Activated B cell treated with CpG ODN at 0.5 μM for 24 hours (primary cell): ENCODE measurements at regions of chr4 and their contacts with region 1.

Region 1: GRCh38 chr4:112296949-112297880 is at the start of gene ALPK1:
- DNase-seq: no peak
- ATAC-seq: peak; percentile 94
- H3K4me3 Mint-ChIP-seq: peak within 1 kb of the TSS; percentile 85
- H3K27ac Mint-ChIP-seq: peak within 1 kb of the TSS; percentile 85
- H3K4me1 Mint-ChIP-seq: peaks cover 23% of the 10 kb centered on the region
- H3K27me3 Mint-ChIP-seq: no peaks in the 10 kb centered on the region
- CTCF ChIP-seq: no peak
- total RNA-seq, gene ALPK1: 23.1 and 26.7 TPM in 2 replicates

Region 2: GRCh38 chr4:110869862-110870572 is 1427.2 kb before region 1 on chr4:
- CTCF ChIA-PET with region 1: no interaction called
- POLR2A ChIA-PET with region 1: no interaction called
- intact Hi-C with region 1: no loop called
- DNase-seq: no peak
- ATAC-seq: peak; percentile 47
- H3K4me3 Mint-ChIP-seq: no peak overlapping the region
- H3K27ac Mint-ChIP-seq: peak overlapping the region; percentile 37
- H3K4me1 Mint-ChIP-seq: peaks cover 11% of the 10 kb centered on the region
- H3K27me3 Mint-ChIP-seq: no peaks in the 10 kb centered on the region
- CTCF ChIP-seq: no peak

Region 3: GRCh38 chr4:112279025-112279881 is 18.0 kb before region 1 on chr4:
- CTCF ChIA-PET with region 1: no interaction called
- POLR2A ChIA-PET with region 1: interaction called, 59 read pairs
- intact Hi-C with region 1: loop called (anchors 2 kb)
- DNase-seq: no peak
- ATAC-seq: peak; percentile 57
- H3K4me3 Mint-ChIP-seq: peak overlapping the region; percentile 80
- H3K27ac Mint-ChIP-seq: peak overlapping the region; percentile 82
- H3K4me1 Mint-ChIP-seq: peaks cover 77% of the 10 kb centered on the region
- H3K27me3 Mint-ChIP-seq: no peaks in the 10 kb centered on the region
- CTCF ChIP-seq: no peak